Cardiac septum (tissue), 1 donor: ENCODE measurements at regions of chr16 and their contacts with region 1.

Region 1: DNA sequence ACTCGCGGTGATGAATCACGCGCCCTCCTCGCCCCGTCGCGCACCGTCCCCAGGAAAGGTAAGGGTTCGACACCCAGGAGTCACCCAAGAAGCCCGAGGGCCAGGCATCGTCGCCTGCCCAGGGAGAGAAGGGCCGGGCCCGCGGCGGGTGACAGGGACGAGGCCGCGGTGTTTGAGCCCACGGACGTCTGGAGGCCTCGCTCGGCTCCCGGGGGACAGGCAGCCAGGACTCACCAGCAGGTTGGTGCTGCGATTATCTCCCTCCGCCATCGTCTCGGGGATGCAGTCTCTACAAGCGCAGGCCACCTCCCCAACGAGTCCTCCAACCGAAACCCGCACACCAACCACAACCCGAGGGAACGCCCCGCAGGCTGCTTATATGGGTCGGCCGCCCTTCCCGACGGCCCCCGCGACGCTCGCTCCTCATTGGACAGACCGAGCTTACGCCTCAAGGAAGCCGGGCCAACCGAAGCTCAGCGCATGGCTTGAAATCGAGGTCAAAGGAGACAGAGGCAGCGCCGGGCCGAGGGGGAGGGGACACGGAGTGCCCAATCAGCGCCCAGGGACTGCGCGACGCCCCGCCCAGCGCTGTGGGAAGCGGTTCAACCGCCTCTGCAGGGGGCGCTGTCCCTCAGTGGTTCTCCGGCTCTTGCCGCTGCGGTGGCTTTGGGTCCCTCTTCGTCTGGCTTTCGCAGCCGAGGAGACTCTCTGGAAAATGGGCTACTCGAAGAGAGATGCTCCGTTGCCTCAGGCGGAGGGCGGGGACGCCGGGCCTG is at the start of gene ARL6IP1:
- DNase-seq: peak; percentile 100
- total RNA-seq, gene ARL6IP1: 19.3 TPM

Region 2: GRCh38 chr16:18789850-18790724 is 11.3 kb before region 1 on chr16 and contains the start of gene RPS15A:
- intact Hi-C with region 1: loop called (anchors 1 kb)
- DNase-seq: peak; percentile 97
- total RNA-seq, gene RPS15A: 510 TPM

Region 3: GRCh38 chr16:18969855-18970240 is 168.5 kb after region 1 on chr16:
- intact Hi-C with region 1: loop called (anchors 5 kb)
- DNase-seq: no peak

Region 4: DNA sequence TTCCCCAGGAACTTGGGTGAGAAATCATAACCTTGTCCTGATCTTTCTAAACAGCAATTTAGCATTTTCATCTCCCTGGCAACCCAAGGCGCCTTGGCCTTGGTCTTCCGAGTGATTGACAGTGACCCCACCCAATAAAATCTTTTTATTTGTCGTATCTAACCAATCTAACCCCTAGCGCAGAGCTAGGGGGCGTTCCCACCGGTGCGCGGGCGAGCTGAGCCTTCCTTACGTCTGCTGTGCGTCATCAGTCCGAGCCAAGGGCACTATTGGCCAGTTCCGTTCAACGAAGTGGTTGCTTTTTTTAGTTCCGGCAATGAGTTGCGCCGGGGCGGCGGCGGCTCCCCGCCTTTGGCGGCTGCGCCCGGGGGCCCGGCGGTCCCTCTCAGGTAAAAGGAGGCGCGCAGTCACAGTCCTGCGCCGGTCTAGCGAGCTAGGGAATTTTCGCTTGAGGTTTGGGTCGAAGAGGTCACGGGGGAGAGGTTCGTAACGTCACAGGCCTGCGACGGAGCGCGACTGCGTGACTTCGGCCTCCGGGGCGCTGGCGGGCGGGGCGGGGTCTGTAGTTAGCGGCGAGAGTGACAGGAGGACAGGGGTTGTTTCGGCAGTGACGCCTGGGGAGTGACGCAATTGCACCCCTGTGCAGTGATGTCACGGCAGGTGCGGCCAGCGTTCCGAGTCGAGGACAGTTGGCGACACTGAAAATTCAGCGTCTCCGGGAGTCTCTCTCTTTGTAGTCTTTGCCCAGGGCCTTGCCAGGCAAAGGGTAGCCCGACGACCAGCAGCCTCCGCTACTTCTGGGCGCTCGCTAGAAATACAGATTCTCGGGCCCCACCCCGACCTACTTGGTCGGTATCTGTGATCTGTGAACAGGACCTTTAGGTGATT is 266.2 kb after region 1 on chr16 and contains the start of gene COQ7:
- intact Hi-C with region 1: loop called (anchors 10 kb)
- DNase-seq: peak; percentile 99
- total RNA-seq, gene COQ7: 32.6 TPM